CD8-positive, alpha-beta T cell (primary cell): ENCODE measurements at regions of chr19 and their contacts with region 1.

Region 1: GRCh38 chr19:12965017-12965811 is 4.2 kb upstream of the DAND5 start:
- DNase-seq: peak; percentile 63 to 88 (median 79)
- ATAC-seq: peak; percentile 95
- H3K4me3 ChIP-seq: peak overlapping the region; percentile 51 to 76
- H3K4me3 Mint-ChIP-seq: peak overlapping the region; percentile 88
- H3K27ac ChIP-seq: no peak overlapping the region
- H3K27ac Mint-ChIP-seq: peak overlapping the region; percentile 53
- H3K4me1 ChIP-seq: peaks cover 9% of the 10 kb centered on the region
- H3K4me1 Mint-ChIP-seq: peaks cover 7% of the 10 kb centered on the region
- H3K27me3 ChIP-seq: no peaks in the 10 kb centered on the region
- H3K27me3 Mint-ChIP-seq: peaks cover 2% of the 10 kb centered on the region
- CTCF ChIP-seq: peak; percentile 93

Region 2: GRCh38 chr19:12881172-12881808 is 83.9 kb before region 1 on chr19 and contains the start of gene DNASE2:
- CTCF ChIA-PET with region 1: interaction called, 123 read pairs
- POLR2A ChIA-PET with region 1: interaction called, 6 read pairs
- intact Hi-C with region 1: loop called (anchors 1 kb)
- DNase-seq: peak; percentile 72 to 94 (median 88)
- ATAC-seq: peak; percentile 75
- H3K4me3 ChIP-seq: peak within 1 kb of the TSS; percentile 80 to 89
- H3K4me3 Mint-ChIP-seq: peak within 1 kb of the TSS; percentile 84
- H3K27ac ChIP-seq: peak within 1 kb of the TSS; percentile 73 to 82
- H3K27ac Mint-ChIP-seq: peak within 1 kb of the TSS; percentile 80
- H3K4me1 ChIP-seq: peaks cover 29% of the 10 kb centered on the region
- H3K4me1 Mint-ChIP-seq: peaks cover 28% of the 10 kb centered on the region
- H3K27me3 ChIP-seq: no peaks in the 10 kb centered on the region
- H3K27me3 Mint-ChIP-seq: no peaks in the 10 kb centered on the region
- CTCF ChIP-seq: no peak
- total RNA-seq, gene DNASE2: 5.9 to 8.4 TPM

Region 3: DNA sequence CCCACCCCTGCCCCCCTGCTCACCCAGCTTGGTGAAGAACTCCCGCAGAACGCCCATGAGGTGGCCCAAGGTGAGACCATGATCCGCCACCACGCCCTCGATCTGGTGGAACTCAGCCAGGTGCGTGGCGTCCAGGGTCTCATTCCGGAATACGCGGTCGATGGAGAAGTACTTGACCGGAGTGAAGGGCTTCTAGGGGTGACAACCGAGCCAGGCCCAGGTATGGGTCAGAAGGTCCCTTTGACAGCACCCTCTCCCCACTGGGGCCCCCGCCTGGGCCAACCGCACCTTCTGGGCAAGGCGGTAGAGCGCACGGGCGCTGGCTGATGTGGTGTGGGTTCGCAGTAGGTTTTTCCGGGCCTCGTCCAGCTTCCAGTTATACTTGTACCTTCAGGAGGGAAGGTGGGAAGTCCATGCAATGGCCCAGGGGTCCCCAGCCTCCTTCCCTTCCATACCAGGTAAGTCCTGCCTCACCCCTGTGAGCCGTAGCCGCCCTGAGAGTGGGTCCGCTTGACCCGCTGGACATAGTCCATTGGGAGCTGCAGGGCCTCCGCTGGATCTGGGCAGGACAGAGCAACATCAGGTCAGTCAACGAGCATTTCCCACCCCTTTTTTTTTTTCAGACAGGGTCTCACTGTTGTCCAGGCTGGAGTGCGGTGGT is 40.5 kb before region 1 on chr19:
- CTCF ChIA-PET with region 1: interaction called, 11 read pairs
- POLR2A ChIA-PET with region 1: no interaction called
- intact Hi-C with region 1: no loop called
- DNase-seq: peak in 1 of 9 experiments; percentile 7
- ATAC-seq: no peak
- H3K4me3 ChIP-seq: no peak overlapping the region
- H3K4me3 Mint-ChIP-seq: no peak overlapping the region
- H3K27ac ChIP-seq: no peak overlapping the region
- H3K27ac Mint-ChIP-seq: no peak overlapping the region
- H3K4me1 ChIP-seq: no peaks in the 10 kb centered on the region
- H3K4me1 Mint-ChIP-seq: peaks cover 2% of the 10 kb centered on the region
- H3K27me3 ChIP-seq: no peaks in the 10 kb centered on the region
- H3K27me3 Mint-ChIP-seq: no peaks in the 10 kb centered on the region
- CTCF ChIP-seq: no peak

Region 4: DNA sequence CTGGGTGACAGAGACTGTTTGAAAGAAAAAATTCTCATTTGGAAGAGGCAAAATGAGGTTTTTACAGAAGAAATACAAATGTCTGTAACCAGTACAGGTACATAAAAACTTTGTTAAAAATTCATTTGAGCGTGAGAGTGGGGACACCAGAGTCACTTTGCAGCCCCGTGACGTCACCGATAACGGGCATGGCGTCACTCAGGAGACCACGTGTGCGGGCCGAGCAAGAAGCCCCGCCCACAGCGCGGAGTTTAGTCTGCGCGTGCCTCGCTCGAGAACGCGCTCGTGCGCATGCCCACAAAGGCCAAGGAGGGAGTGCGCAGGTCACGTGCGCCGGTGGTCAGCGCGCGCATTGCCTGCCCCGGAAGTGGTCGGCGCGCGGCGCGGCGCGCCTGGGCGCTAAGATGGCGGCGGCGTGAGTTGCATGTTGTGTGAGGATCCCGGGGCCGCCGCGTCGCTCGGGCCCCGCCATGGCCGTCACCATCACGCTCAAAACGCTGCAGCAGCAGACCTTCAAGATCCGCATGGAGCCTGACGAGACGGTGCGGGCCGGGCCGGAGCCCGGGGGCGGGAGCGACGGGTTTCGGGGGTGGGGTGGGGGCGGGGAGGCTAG is 19.6 kb before region 1 on chr19 and contains the start of gene RAD23A:
- CTCF ChIA-PET with region 1: interaction called, 22 read pairs
- POLR2A ChIA-PET with region 1: no interaction called
- intact Hi-C with region 1: loop called in 1 of 2 experiments (anchors 1 kb)
- DNase-seq: peak; percentile 97 to 100 (median 98)
- ATAC-seq: peak; percentile 86
- H3K4me3 ChIP-seq: peak within 1 kb of the TSS; percentile 60 to 64
- H3K4me3 Mint-ChIP-seq: peak within 1 kb of the TSS; percentile 91
- H3K27ac ChIP-seq: peak within 1 kb of the TSS; percentile 67 to 83
- H3K27ac Mint-ChIP-seq: peak within 1 kb of the TSS; percentile 96
- H3K4me1 ChIP-seq: peaks cover 35% of the 10 kb centered on the region
- H3K4me1 Mint-ChIP-seq: peaks cover 43% of the 10 kb centered on the region
- H3K27me3 ChIP-seq: no peaks in the 10 kb centered on the region
- H3K27me3 Mint-ChIP-seq: no peaks in the 10 kb centered on the region
- CTCF ChIP-seq: no peak
- total RNA-seq, gene RAD23A: 86.3 to 90.8 TPM

Region 5: GRCh38 chr19:13002166-13002898 is 37.1 kb after region 1 on chr19:
- CTCF ChIA-PET with region 1: interaction called, 10 read pairs
- POLR2A ChIA-PET with region 1: no interaction called
- intact Hi-C with region 1: no loop called
- DNase-seq: no peak
- ATAC-seq: no peak
- H3K4me3 ChIP-seq: no peak overlapping the region
- H3K4me3 Mint-ChIP-seq: no peak overlapping the region
- H3K27ac ChIP-seq: no peak overlapping the region
- H3K27ac Mint-ChIP-seq: no peak overlapping the region
- H3K4me1 ChIP-seq: no peaks in the 10 kb centered on the region
- H3K4me1 Mint-ChIP-seq: no peaks in the 10 kb centered on the region
- H3K27me3 ChIP-seq: no peaks in the 10 kb centered on the region
- H3K27me3 Mint-ChIP-seq: no peaks in the 10 kb centered on the region
- CTCF ChIP-seq: no peak

Region 6: GRCh38 chr19:13082192-13083007 is 117.2 kb after region 1 on chr19:
- CTCF ChIA-PET with region 1: interaction called, 22 read pairs
- POLR2A ChIA-PET with region 1: no interaction called
- intact Hi-C with region 1: no loop called
- DNase-seq: no peak
- ATAC-seq: no peak
- H3K4me3 ChIP-seq: no peak overlapping the region
- H3K4me3 Mint-ChIP-seq: no peak overlapping the region
- H3K27ac ChIP-seq: no peak overlapping the region
- H3K27ac Mint-ChIP-seq: no peak overlapping the region
- H3K4me1 ChIP-seq: no peaks in the 10 kb centered on the region
- H3K4me1 Mint-ChIP-seq: peaks cover 2% of the 10 kb centered on the region
- H3K27me3 ChIP-seq: no peaks in the 10 kb centered on the region
- H3K27me3 Mint-ChIP-seq: no peaks in the 10 kb centered on the region
- CTCF ChIP-seq: no peak

Region 7: GRCh38 chr19:13104360-13104847 is 139.2 kb after region 1 on chr19:
- CTCF ChIA-PET with region 1: interaction called, 12 read pairs
- POLR2A ChIA-PET with region 1: interaction called, 8 read pairs
- intact Hi-C with region 1: no loop called
- DNase-seq: peak in 8 of 9 experiments; percentile 53 to 79 (median 70)
- ATAC-seq: peak; percentile 64
- H3K4me3 ChIP-seq: peak overlapping the region; percentile 59 to 81
- H3K4me3 Mint-ChIP-seq: peak overlapping the region; percentile 89
- H3K27ac ChIP-seq: peak overlapping the region; percentile 60 to 63
- H3K27ac Mint-ChIP-seq: peak overlapping the region; percentile 87
- H3K4me1 ChIP-seq: peaks cover 51% of the 10 kb centered on the region
- H3K4me1 Mint-ChIP-seq: peaks cover 34% of the 10 kb centered on the region
- H3K27me3 ChIP-seq: no peaks in the 10 kb centered on the region
- H3K27me3 Mint-ChIP-seq: no peaks in the 10 kb centered on the region
- CTCF ChIP-seq: peak; percentile 92